ENCODE measurements at regions of chr10 and their contacts with region 1.

Region 1: GRCh38 chr10:96642973-96643372 is 56.2 kb upstream of the TM9SF3 start:
- DNase-seq: peak; percentile 86
- H3K4me3 Mint-ChIP-seq: no peak overlapping the region
- H3K27ac Mint-ChIP-seq: no peak overlapping the region
- H3K4me1 Mint-ChIP-seq: peaks cover 18% of the 10 kb centered on the region
- H3K27me3 Mint-ChIP-seq: no peaks in the 10 kb centered on the region

Region 2: GRCh38 chr10:96395931-96396877 is 246.8 kb before region 1 on chr10:
- CTCF ChIA-PET with region 1: no interaction called
- POLR2A ChIA-PET with region 1: no interaction called
- intact Hi-C with region 1: loop called (anchors 5 kb)
- DNase-seq: peak; percentile 74
- H3K4me3 Mint-ChIP-seq: no peak overlapping the region
- H3K27ac Mint-ChIP-seq: no peak overlapping the region
- H3K4me1 Mint-ChIP-seq: peaks cover 6% of the 10 kb centered on the region
- H3K27me3 Mint-ChIP-seq: peaks cover 17% of the 10 kb centered on the region

Region 3: DNA sequence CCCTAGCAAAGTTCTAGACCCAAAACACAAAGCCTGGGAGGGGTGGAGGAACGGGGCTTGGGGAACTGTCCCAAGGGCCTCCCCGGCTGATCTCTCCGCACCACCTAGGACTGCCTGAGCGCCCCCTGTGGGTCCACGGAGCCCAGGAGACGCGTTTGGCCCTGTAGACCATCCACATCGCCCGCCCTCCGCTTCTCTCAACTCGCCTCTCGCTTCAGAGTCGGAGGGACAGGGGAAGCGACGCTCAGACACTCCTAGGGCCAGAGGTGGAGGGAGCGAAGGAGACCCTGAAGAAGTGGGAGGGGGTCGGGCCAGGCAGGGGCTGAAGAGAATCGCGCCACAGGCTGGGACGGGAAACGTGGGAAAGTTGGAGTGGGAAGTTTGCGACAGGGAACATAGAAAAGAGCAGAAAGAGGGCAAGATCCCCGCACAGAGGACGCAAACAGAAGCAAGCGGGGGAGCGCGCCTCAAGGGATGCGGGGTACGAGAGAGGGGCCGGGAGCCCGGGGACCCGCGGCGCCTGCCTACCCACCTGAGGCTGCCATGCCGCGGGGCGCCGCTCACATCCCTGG is 77.0 kb after region 1 on chr10:
- CTCF ChIA-PET with region 1: interaction called, 5 read pairs
- POLR2A ChIA-PET with region 1: no interaction called
- intact Hi-C with region 1: loop called (anchors 1 kb)
- DNase-seq: peak; percentile 69
- H3K4me3 Mint-ChIP-seq: peak overlapping the region; percentile 89
- H3K27ac Mint-ChIP-seq: no peak overlapping the region
- H3K4me1 Mint-ChIP-seq: peaks cover 12% of the 10 kb centered on the region
- H3K27me3 Mint-ChIP-seq: peaks cover 1% of the 10 kb centered on the region

Region 4: GRCh38 chr10:96747734-96748550 is 105.0 kb after region 1 on chr10:
- CTCF ChIA-PET with region 1: interaction called, 4 read pairs
- POLR2A ChIA-PET with region 1: no interaction called
- intact Hi-C with region 1: loop called (anchors 5 kb)
- DNase-seq: peak; percentile 26
- H3K4me3 Mint-ChIP-seq: no peak overlapping the region
- H3K27ac Mint-ChIP-seq: no peak overlapping the region
- H3K4me1 Mint-ChIP-seq: peaks cover 7% of the 10 kb centered on the region
- H3K27me3 Mint-ChIP-seq: no peaks in the 10 kb centered on the region

Region 5: GRCh38 chr10:96896884-96897589 is 254.1 kb after region 1 on chr10:
- CTCF ChIA-PET with region 1: no interaction called
- POLR2A ChIA-PET with region 1: no interaction called
- intact Hi-C with region 1: loop called (anchors 5 kb)
- DNase-seq: no peak
- H3K4me3 Mint-ChIP-seq: no peak overlapping the region
- H3K27ac Mint-ChIP-seq: peak overlapping the region; percentile 43
- H3K4me1 Mint-ChIP-seq: peaks cover 48% of the 10 kb centered on the region
- H3K27me3 Mint-ChIP-seq: no peaks in the 10 kb centered on the region

Measured in activated CD4-positive, alpha-beta memory T cell treated with anti-CD3 and anti-CD28 coated beads for 36 hours (primary cell).